ENCODE measurements at regions of chr16 and their contacts with region 1.

Region 1: GRCh38 chr16:21584817-21585216 is 14.6 kb upstream of the METTL9 start:
- DNase-seq: no peak
- ATAC-seq: no peak
- H3K4me3 ChIP-seq: no peak overlapping the region
- H3K27ac ChIP-seq: no peak overlapping the region
- H3K4me1 ChIP-seq: no peaks in the 10 kb centered on the region
- H3K27me3 ChIP-seq: no peaks in the 10 kb centered on the region

Region 2: GRCh38 chr16:21646721-21647561 is 62.1 kb after region 1 on chr16:
- intact Hi-C with region 1: loop called (anchors 5 to 10 kb)
- DNase-seq: no peak
- ATAC-seq: no peak
- H3K4me3 ChIP-seq: no peak overlapping the region
- H3K27ac ChIP-seq: no peak overlapping the region
- H3K4me1 ChIP-seq: no peaks in the 10 kb centered on the region
- H3K27me3 ChIP-seq: no peaks in the 10 kb centered on the region

Region 3: GRCh38 chr16:21708533-21709115 is 123.8 kb after region 1 on chr16:
- intact Hi-C with region 1: loop called (anchors 5 kb)
- DNase-seq: peak; percentile 73 to 79
- ATAC-seq: peak; percentile 59
- H3K4me3 ChIP-seq: no peak overlapping the region
- H3K27ac ChIP-seq: no peak overlapping the region
- H3K4me1 ChIP-seq: no peaks in the 10 kb centered on the region
- H3K27me3 ChIP-seq: no peaks in the 10 kb centered on the region

Region 4: GRCh38 chr16:21713549-21714368 is 128.9 kb after region 1 on chr16:
- intact Hi-C with region 1: loop called in 1 of 2 experiments (anchors 5 kb)
- DNase-seq: no peak
- ATAC-seq: no peak
- H3K4me3 ChIP-seq: no peak overlapping the region
- H3K27ac ChIP-seq: no peak overlapping the region
- H3K4me1 ChIP-seq: no peaks in the 10 kb centered on the region
- H3K27me3 ChIP-seq: no peaks in the 10 kb centered on the region

Measured in aorta (tissue), 5 donors.